ENCODE measurements at regions of chr2 and their contacts with region 1.

Region 1: DNA sequence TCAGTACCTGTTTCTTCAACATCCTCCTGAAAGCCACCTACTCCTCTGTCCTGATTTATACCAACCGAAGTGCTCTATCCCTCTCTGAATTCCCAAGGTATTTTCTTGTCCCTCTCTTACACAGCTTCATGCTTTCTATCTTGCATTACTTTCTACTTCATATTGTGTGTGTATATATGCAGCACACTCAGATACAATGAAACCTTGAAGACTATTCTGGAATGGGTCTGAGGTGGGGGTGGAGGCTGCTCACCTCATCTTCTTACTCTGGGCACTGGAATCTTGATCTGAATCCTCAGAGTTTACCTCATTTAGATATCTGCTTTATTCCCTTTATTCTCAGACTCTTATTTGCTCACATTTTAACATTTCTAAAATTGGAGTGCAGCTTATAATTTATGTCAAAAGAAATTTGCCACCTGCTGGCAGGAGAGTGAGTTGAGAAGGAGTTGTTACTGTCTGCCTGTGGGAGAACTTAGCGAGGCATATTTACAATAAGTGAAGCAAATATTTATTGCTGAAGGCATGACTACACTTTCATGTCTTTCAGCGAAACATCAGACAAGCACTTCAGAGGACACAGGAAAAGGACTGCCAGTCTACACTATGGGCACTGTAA is 16.6 kb upstream of the KIAA2012 start:
- DNase-seq: no peak
- H3K4me3 ChIP-seq: no peak overlapping the region
- H3K27ac ChIP-seq: no peak overlapping the region
- H3K4me1 ChIP-seq: peaks cover 3% of the 10 kb centered on the region
- H3K27me3 ChIP-seq: no peaks in the 10 kb centered on the region
- CTCF ChIP-seq: no peak
- EP300 ChIP-seq: no peak
- POLR2A ChIP-seq: no peak

Region 2: DNA sequence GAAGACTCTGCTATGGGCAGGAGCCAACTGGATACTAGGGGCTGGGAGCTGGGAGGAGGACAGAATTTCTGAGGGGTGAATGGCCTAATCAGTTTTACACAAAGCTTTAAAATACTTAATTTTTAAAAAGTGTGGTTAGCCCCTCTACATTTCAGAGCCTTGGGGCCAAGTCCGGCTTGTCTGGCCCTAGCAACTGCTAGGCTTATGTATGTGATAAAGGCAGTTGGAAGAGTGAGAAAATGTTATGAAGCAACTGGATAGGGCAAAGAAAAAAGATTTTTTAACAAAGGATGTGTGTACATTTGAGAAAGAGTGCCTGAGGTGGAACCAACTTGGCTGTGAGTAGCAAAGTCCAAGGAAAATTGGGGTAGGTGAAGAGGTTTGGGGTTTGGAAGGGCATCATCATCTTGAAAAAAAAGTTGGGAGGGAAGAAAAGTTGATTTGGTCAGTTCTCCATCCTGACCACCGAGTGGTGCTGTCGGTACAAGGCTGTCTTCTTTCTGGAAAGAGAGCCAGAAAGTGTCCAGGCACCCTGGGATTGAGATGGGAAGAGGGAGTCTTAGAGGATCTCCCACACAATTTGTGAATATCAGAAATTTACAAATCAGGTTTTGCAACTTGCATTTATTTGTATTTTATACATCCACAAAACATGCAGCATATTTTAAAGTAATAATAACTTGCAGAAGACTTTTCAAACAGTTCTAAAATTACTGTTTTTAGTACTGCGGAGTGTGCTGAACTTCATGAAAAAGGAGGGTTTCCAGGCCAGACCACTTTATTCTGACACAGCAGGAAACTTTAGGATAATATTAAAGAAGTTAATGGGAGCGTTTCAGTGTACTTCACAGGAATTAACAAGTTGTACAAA is 260.7 kb before region 1 on chr2:
- intact Hi-C with region 1: no loop called
- DNase-seq: peak in 4 of 5 donors; percentile 45 to 47 (median 46)
- H3K4me3 ChIP-seq: no peak overlapping the region
- H3K27ac ChIP-seq: no peak overlapping the region
- H3K4me1 ChIP-seq: no peaks in the 10 kb centered on the region
- H3K27me3 ChIP-seq: no peaks in the 10 kb centered on the region
- CTCF ChIP-seq: peak; percentile 17 to 65 (median 65)
- EP300 ChIP-seq: no peak
- POLR2A ChIP-seq: no peak

Region 3: DNA sequence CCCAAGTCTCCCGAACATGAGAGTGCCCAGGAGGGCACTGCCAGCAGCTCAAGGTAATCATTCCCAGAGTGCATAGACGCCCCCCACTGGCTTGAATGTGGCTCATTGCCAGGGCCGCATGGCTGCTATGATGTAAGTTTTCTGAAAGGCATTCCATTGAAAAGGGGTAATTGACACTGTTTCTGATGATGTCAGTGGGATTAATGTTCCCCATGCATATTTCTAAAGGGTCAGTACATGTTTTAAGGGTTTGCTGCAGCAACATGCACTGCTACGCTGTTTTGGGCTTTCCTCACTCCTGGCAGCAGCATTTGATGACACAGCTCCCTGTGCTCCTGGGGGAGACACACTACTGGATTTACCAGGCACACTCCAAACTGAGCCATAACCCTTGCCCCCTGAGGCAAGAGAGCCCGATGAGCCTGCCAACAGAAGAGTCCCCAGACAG is 53.3 kb after region 1 on chr2:
- intact Hi-C with region 1: loop called in 1 of 4 experiments (anchors 10 kb)
- DNase-seq: peak in 3 of 5 donors; percentile 40 to 55 (median 52)
- H3K4me3 ChIP-seq: no peak overlapping the region
- H3K27ac ChIP-seq: no peak overlapping the region
- H3K4me1 ChIP-seq: no peaks in the 10 kb centered on the region
- H3K27me3 ChIP-seq: no peaks in the 10 kb centered on the region
- CTCF ChIP-seq: no peak
- EP300 ChIP-seq: no peak
- POLR2A ChIP-seq: no peak

Measured in ovary (tissue), 10 donors.